Activated CD4-positive, alpha-beta T cell treated with anti-CD3 and anti-CD28 coated beads, Interleukin-2, amount 10 ng/mL, durations not matched to agents 24 days and 14 days (primary cell): ENCODE measurements at regions of chr7 and their contacts with region 1.

Region 1: DNA sequence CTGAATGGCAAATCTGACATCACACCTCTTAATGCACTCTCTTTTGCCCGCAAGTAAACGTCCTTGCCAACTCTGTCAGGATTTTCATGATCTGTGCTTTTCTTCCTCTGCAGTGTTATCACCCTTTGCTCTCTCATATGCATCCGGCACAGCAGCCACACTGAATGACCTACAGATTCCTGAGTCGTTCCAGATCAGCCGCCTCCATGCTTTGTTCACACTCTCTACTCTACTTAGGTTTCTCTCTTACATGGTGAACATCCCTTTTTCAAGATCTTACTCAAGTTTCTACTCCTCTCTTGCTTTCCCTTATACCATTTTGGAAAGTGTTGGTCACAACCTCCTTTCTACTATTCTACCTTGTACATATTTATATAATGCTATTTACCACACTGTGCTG is 127.7 kb upstream of the AOAH start:
- DNase-seq: no peak
- H3K4me3 Mint-ChIP-seq: peak overlapping the region; percentile 36
- H3K27ac Mint-ChIP-seq: peak overlapping the region; percentile 79
- H3K4me1 Mint-ChIP-seq: peaks cover 24% of the 10 kb centered on the region
- H3K27me3 Mint-ChIP-seq: no peaks in the 10 kb centered on the region

Region 2: GRCh38 chr7:36827726-36828703 is 24.0 kb before region 1 on chr7:
- intact Hi-C with region 1: no loop called
- DNase-seq: peak; percentile 43
- H3K4me3 Mint-ChIP-seq: no peak overlapping the region
- H3K27ac Mint-ChIP-seq: no peak overlapping the region
- H3K4me1 Mint-ChIP-seq: no peaks in the 10 kb centered on the region
- H3K27me3 Mint-ChIP-seq: no peaks in the 10 kb centered on the region

Region 3: GRCh38 chr7:36884910-36885309 is 32.9 kb after region 1 on chr7:
- intact Hi-C with region 1: no loop called
- DNase-seq: no peak
- H3K4me3 Mint-ChIP-seq: no peak overlapping the region
- H3K27ac Mint-ChIP-seq: no peak overlapping the region
- H3K4me1 Mint-ChIP-seq: peaks cover 12% of the 10 kb centered on the region
- H3K27me3 Mint-ChIP-seq: no peaks in the 10 kb centered on the region

Region 4: DNA sequence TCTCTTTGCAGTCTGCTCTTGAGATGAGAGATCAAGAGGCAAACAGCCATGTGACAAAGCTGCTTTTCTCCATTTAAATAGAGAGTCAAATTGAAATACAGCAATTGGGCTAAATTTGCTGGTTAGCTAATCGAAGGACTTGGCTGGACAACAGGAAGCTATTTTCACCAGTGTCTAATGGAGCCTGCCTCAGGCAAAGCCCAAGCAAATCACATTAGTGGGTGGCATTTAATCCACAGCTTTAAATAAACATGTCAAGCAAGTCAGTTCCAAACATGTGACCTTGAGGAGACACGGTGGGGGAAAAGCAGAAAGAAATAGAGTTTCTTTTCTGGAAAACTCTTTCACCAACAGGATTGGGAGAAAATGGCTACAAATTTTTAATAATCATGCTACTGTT is 52.8 kb after region 1 on chr7:
- intact Hi-C with region 1: no loop called
- DNase-seq: no peak
- H3K4me3 Mint-ChIP-seq: no peak overlapping the region
- H3K27ac Mint-ChIP-seq: no peak overlapping the region
- H3K4me1 Mint-ChIP-seq: peaks cover 2% of the 10 kb centered on the region
- H3K27me3 Mint-ChIP-seq: no peaks in the 10 kb centered on the region

Region 5: DNA sequence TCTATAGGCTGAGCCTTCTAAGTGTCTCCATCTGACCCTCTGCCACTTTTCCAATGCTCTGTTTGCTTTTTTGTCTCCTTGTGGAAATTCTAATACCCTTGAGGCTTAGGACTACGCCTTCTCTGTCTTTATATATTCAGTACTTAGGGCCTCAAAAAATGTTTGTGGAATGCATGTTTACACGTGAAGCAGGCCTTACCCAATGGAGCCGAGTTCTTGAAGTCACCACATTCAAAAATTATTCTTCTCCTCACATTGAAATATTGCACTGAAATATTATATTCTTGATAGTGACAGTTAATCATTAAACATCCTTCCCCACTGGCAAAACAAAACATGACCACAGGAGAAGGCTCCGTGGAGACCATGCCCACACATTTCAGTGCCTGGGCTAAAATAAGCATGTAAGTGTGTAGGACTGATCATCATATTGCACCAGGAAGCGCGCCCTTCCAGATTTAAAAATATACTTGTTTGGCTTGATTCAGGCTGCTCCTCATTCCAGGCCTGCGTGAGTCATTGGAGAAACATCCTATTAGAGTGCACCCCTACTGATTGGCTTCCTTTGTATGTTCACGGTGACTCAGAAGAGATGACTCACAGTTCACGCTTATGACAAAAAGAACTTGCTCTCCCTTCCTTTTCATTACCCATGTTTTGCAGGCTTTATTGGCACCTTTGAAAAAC is 179.7 kb after region 1 on chr7:
- intact Hi-C with region 1: loop called (anchors 2 kb)
- DNase-seq: peak; percentile 72
- H3K4me3 Mint-ChIP-seq: no peak overlapping the region
- H3K27ac Mint-ChIP-seq: peak overlapping the region; percentile 77
- H3K4me1 Mint-ChIP-seq: peaks cover 49% of the 10 kb centered on the region
- H3K27me3 Mint-ChIP-seq: no peaks in the 10 kb centered on the region

Region 6: DNA sequence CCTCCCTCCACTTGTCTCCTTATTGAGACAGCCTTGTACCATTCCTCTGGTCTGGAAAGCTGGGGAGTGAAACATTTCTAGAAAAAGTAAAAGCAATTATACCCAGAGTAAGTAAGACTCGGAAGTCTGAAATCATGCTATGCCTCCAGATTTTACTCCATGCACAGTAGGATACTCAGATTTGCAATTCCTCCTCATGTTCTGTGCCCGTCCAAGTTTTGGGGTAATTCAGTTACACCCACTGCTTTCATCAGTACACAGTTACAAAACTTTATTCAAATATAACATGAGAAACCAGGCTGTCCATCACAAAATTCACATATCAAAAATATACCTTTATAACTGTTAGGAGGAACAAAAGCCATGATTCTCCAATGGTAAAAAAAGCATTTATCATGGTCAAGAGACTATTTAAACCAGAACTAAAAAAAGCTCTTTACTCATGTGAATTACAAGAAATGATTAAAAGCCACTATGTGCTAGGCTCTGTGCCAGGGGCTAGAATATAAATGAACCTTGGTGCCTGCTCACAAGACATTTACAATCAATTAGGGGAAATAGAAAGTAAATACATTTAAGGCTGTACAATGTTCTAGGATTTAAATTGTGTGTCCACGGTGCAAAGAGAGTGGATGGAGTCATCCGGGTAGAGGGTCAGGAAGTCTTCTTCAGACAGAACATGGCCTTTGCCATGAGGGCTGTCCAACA is 276.5 kb after region 1 on chr7:
- intact Hi-C with region 1: no loop called
- DNase-seq: no peak
- H3K4me3 Mint-ChIP-seq: no peak overlapping the region
- H3K27ac Mint-ChIP-seq: no peak overlapping the region
- H3K4me1 Mint-ChIP-seq: peaks cover 9% of the 10 kb centered on the region
- H3K27me3 Mint-ChIP-seq: no peaks in the 10 kb centered on the region